Naive thymus-derived CD4-positive, alpha-beta T cell (primary cell): ENCODE measurements at regions of chr22 and their contacts with region 1.

Region 1: DNA sequence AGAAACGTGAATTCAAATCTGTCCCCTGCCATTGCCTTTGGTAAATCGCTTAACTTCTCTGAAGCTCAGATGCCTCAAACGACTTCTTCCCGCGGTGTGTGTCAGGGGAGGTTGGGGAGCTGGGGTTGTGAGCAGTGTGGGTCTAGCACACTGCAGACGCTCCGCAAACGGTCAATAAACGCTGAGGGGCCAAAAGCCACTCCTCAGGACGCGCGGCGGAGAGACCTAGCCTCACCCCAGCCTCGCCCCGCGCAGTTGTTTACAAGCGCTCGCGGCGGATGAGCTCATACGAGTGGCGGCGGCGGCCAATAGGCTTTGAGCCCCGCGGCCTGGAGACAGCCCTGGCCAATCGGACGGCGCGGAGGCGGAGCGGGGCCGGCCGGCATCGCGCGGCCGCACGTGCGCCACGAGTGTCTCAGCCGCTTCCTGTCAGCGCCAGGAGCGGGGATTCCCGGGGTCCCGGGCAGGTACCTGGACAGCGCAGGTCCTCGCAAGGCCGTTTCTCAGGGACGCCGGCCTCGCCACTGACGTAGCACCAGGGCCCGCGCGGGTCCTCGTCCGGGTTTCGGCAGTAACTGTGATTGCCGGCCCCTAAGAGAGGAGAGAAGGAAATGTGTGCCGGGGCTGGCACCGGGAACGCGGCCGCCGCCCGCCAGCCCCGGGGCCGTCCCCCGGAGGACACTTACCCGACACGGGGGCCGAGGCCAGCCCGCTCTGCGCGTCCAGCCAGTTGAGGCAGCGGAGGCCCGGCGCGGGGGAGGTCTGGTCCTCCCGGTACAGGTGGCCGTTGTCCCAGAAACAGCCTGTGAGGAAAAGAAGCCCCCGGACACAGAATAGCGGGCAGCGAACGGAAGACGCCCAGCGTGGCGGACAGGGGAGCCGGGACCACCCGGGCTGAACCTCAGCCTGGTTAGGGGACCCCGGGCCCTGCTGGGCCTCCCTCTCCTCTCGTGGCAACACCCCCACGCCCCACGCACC is 1.5 kb downstream of the PIK3IP1 start:
- DNase-seq: peak; percentile 94 to 98 (median 97)
- ATAC-seq: peak; percentile 86
- H3K4me3 ChIP-seq: peak overlapping the region; percentile 100
- H3K4me3 Mint-ChIP-seq: peak overlapping the region; percentile 92 to 100 (median 98)
- H3K27ac ChIP-seq: peak overlapping the region; percentile 100
- H3K27ac Mint-ChIP-seq: peak overlapping the region; percentile 98 to 100 (median 99)
- H3K4me1 ChIP-seq: peaks cover 53 to 54% of the 10 kb centered on the region in 2 donors
- H3K4me1 Mint-ChIP-seq: peaks cover 24 to 65% (median 60%) of the 10 kb centered on the region in 7 donors
- H3K27me3 ChIP-seq: no peaks in the 10 kb centered on the region
- H3K27me3 Mint-ChIP-seq: no peaks in the 10 kb centered on the region

Region 2: GRCh38 chr22:31080848-31081649 is 209.7 kb before region 1 on chr22 and contains the start of gene SMTN:
- CTCF ChIA-PET with region 1: no interaction called
- POLR2A ChIA-PET with region 1: interaction called, 7 read pairs
- intact Hi-C with region 1: loop called in 1 of 2 experiments (anchors 5 kb)
- DNase-seq: peak; percentile 75 to 90 (median 84)
- ATAC-seq: peak; percentile 83
- H3K4me3 ChIP-seq: peak within 1 kb of the TSS; percentile 84
- H3K4me3 Mint-ChIP-seq: peak within 1 kb of the TSS; percentile 83 to 93 (median 88)
- H3K27ac ChIP-seq: peak within 1 kb of the TSS; percentile 43
- H3K27ac Mint-ChIP-seq: peak within 1 kb of the TSS in 8 of 9 donors; percentile 35 to 78 (median 68)
- H3K4me1 ChIP-seq: peaks cover 13 to 39% of the 10 kb centered on the region in 2 donors
- H3K4me1 Mint-ChIP-seq: peaks cover 26 to 43% (median 38%) of the 10 kb centered on the region in 7 donors
- H3K27me3 ChIP-seq: no peaks in the 10 kb centered on the region
- H3K27me3 Mint-ChIP-seq: no peaks in the 10 kb centered on the region
- total RNA-seq, gene SMTN: 3.1 to 14.9 (median 6.2) TPM

Region 3: DNA sequence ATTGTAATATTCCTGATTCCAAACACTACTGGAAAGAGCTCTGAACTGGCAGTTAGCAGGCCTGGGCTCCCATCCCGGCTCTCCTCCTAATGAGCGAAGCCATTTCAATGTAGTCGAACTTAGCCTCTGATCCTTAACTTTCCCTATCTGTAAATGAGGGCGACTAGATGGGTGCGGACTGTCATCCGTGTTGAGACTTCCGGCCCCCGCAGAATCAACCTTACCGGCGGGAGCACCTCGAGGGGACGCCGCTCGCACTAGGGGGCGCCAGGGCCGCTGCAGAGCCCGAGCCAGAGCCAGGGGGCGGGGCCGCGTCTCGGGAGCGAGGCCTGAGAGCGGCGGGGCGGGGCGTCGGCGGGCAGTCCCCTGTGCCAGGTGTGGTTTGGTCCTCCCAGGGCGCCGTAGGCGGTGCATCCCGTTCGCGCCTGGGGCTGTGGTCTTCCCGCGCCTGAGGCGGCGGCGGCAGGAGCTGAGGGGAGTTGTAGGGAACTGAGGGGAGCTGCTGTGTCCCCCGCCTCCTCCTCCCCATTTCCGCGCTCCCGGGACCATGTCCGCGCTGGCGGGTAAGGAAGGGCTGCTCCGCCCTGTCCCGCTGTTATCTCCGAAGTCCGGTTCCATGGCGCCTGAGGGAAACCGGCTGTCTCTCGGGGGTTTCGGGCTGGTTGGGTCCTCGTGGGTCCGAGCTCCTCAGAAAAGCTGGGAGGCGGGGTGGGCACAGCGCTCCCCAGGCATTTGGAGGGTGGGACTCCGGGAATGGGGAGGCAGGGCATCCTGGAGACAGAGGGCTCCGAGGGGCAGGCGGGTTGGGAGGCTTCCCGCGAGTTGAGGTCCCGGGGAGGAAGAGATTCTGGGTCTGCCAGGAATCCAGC is 78.7 kb before region 1 on chr22 and contains the start of gene LIMK2:
- CTCF ChIA-PET with region 1: interaction called, 6 read pairs
- POLR2A ChIA-PET with region 1: interaction called, 76 read pairs
- intact Hi-C with region 1: loop called (anchors 1 kb)
- DNase-seq: peak; percentile 90 to 99 (median 95)
- ATAC-seq: peak; percentile 100
- H3K4me3 ChIP-seq: peak within 1 kb of the TSS; percentile 83
- H3K4me3 Mint-ChIP-seq: peak within 1 kb of the TSS; percentile 86 to 91 (median 88)
- H3K27ac ChIP-seq: peak within 1 kb of the TSS; percentile 82
- H3K27ac Mint-ChIP-seq: peak within 1 kb of the TSS; percentile 82 to 96 (median 89)
- H3K4me1 ChIP-seq: peaks cover 23 to 31% of the 10 kb centered on the region in 2 donors
- H3K4me1 Mint-ChIP-seq: peaks cover 38 to 72% (median 51%) of the 10 kb centered on the region in 7 donors
- H3K27me3 ChIP-seq: no peaks in the 10 kb centered on the region
- H3K27me3 Mint-ChIP-seq: no peaks in the 10 kb centered on the region
- total RNA-seq, gene LIMK2: 18.3 to 49.9 (median 28.8) TPM

Region 4: GRCh38 chr22:31272522-31273446 is 18.0 kb before region 1 on chr22:
- CTCF ChIA-PET with region 1: interaction called, 73 read pairs
- POLR2A ChIA-PET with region 1: interaction called, 2,331 read pairs
- intact Hi-C with region 1: no loop called
- DNase-seq: peak in 5 of 9 donors; percentile 38 to 58 (median 50)
- ATAC-seq: peak; percentile 81
- H3K4me3 ChIP-seq: no peak overlapping the region
- H3K4me3 Mint-ChIP-seq: peak overlapping the region in 4 of 10 donors; percentile 18 to 50 (median 28)
- H3K27ac ChIP-seq: peak overlapping the region; percentile 51
- H3K27ac Mint-ChIP-seq: peak overlapping the region; percentile 46 to 95 (median 86)
- H3K4me1 ChIP-seq: peaks cover 2 to 63% of the 10 kb centered on the region in 2 donors
- H3K4me1 Mint-ChIP-seq: peaks cover 25 to 91% (median 77%) of the 10 kb centered on the region in 7 donors
- H3K27me3 ChIP-seq: no peaks in the 10 kb centered on the region
- H3K27me3 Mint-ChIP-seq: no peaks in the 10 kb centered on the region

Region 5: DNA sequence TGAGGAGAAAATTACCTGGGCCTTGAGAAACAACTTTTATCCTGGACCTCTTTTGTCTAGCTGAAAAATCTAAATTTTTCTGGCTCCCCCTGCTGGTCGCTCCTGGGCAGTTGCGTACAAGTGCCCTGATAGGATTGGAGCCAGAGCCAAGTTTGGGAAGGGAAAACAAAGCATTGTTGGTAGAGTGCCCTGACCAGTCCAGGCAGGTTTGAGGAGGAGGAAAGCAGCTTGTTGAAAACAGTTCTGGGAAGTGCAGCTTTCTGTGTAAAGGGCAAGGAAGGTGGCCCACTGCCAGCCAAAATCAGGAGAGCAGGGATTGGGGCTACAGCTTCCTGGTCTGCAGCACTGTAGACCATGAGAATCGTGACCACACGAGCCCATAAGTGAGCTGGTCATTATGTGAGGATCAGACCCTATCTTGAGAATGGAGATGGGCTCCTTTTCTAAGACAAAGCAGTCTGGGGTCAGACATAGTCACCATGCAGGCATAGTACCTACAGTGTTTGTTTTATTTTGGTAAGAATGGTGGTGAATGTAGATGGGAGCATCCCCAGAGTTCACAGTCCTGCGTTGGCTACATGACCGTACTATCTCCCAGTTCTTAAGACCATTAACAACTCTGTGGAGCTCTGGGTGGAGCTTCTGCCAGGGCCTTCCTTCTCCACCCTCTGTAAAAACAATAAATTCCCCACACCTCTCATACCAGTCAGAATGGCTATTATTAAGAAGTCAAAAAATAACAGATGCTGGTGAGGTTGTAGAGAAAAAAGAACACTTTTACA is 22.8 kb after region 1 on chr22:
- CTCF ChIA-PET with region 1: interaction called, 33 read pairs
- POLR2A ChIA-PET with region 1: interaction called, 2,331 read pairs
- intact Hi-C with region 1: loop called (anchors 1 kb)
- DNase-seq: peak; percentile 40 to 71 (median 62)
- ATAC-seq: peak; percentile 76
- H3K4me3 ChIP-seq: no peak overlapping the region
- H3K4me3 Mint-ChIP-seq: peak overlapping the region in 3 of 10 donors; percentile 2 to 10 (median 9)
- H3K27ac ChIP-seq: peak overlapping the region; percentile 32
- H3K27ac Mint-ChIP-seq: peak overlapping the region; percentile 16 to 84 (median 45)
- H3K4me1 ChIP-seq: peaks cover 2 to 10% of the 10 kb centered on the region in 2 donors
- H3K4me1 Mint-ChIP-seq: peaks cover 9 to 33% (median 26%) of the 10 kb centered on the region in 7 donors
- H3K27me3 ChIP-seq: no peaks in the 10 kb centered on the region
- H3K27me3 Mint-ChIP-seq: no peaks in the 10 kb centered on the region

Region 6: DNA sequence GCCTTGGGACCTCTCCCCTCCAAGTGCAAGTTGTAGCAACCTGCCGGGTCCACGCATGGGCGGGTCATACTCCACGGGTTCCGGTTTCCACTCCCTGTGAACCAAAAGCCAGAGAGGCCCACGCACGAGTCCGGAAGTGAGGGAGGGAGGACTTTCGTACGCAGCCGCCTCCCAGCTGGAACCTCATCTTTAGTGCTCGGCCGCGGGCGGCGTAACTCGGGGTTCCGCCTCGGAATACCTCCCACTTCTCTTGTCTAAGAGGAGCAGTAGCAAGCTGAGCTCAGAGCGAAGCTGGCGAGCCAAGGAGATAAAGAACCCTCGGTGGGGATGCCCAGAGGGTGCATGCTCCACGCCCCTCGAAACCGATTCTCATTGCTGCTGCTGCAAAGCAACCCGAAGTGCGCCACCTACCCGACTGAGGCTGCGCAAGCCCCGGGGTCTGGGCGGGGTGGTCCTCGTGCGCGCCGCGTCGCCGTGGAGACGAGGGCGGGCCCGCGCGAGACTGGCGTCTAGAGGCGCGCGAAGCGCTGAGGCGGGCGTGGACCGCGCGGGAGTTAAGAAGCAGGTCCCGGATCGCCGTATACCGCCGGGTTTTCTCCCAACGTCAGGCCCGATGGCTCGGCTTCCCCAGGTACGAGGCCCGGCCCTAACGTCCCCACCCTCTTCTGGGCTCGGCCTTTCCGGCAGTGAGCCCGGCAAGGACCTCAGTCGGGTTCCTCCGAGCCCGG is 205.4 kb after region 1 on chr22 and contains the start of gene SFI1:
- CTCF ChIA-PET with region 1: no interaction called
- POLR2A ChIA-PET with region 1: interaction called, 10 read pairs
- intact Hi-C with region 1: loop called (anchors 1 to 2 kb)
- DNase-seq: peak; percentile 91 to 98 (median 96)
- ATAC-seq: peak; percentile 93
- H3K4me3 ChIP-seq: peak within 1 kb of the TSS; percentile 83
- H3K4me3 Mint-ChIP-seq: peak within 1 kb of the TSS; percentile 85 to 99 (median 96)
- H3K27ac ChIP-seq: peak within 1 kb of the TSS; percentile 92
- H3K27ac Mint-ChIP-seq: peak within 1 kb of the TSS; percentile 92 to 99 (median 98)
- H3K4me1 ChIP-seq: peaks cover 18 to 20% of the 10 kb centered on the region in 2 donors
- H3K4me1 Mint-ChIP-seq: peaks cover 7 to 50% (median 43%) of the 10 kb centered on the region in 7 donors
- H3K27me3 ChIP-seq: no peaks in the 10 kb centered on the region
- H3K27me3 Mint-ChIP-seq: no peaks in the 10 kb centered on the region
- total RNA-seq, gene SFI1: 196 to 359 (median 343) TPM